A549 (cell line): ENCODE measurements at regions of chr9 and their contacts with region 1.

Region 1: DNA sequence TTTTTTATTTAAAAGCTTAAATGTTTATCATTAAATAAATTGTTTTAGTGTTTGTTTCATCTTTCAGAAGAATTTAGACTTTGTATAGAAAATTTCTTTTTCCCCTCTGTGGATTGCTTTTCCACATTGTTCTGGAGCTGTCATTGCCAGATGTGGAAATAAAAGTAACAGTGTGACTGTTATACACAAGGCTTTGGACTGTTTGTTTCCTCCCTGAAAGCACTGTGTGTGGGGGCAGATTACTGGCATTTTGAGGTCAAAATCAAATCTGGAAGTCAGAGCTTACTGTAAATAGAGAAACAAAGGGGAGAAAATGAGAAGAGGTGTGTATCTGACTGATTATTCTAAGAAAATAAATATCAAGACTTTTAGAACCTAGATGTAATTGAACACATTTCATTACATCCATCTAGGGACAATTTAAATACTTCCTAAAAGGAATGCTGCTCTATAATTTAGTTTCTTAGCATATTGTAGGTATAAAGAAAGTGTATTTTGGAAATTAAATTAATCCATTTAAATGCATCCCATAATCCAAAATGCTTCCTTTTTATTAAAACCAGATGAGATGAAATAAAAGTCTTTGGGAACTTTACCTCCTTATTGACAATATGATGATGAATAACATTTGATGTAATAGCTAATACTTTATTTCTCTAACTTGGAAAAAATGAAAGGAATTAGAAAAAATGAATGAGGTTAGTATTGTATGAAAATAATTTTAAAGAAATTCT is 51.9 kb downstream of the ERCC6L2 start:
- DNase-seq: no peak
- ATAC-seq: no peak
- H3K4me3 ChIP-seq: no peak overlapping the region
- H3K27ac ChIP-seq: no peak overlapping the region
- H3K4me1 ChIP-seq: no peaks in the 10 kb centered on the region
- CTCF ChIP-seq: no peak
- EP300 ChIP-seq: no peak
- POLR2A ChIP-seq: no peak
- RAD21 ChIP-seq: no peak

Region 2: GRCh38 chr9:95966306-95966705 is 38.9 kb after region 1 on chr9:
- CTCF ChIA-PET with region 1: no interaction called
- POLR2A ChIA-PET with region 1: no interaction called
- DNase-seq: no peak
- ATAC-seq: no peak
- H3K4me3 ChIP-seq: no peak overlapping the region
- H3K27ac ChIP-seq: no peak overlapping the region
- H3K4me1 ChIP-seq: no peaks in the 10 kb centered on the region
- CTCF ChIP-seq: no peak
- EP300 ChIP-seq: no peak
- POLR2A ChIP-seq: no peak
- RAD21 ChIP-seq: no peak

Region 3: GRCh38 chr9:96109680-96110351 is 182.4 kb after region 1 on chr9:
- CTCF ChIA-PET with region 1: no interaction called
- POLR2A ChIA-PET with region 1: interaction called, 11 read pairs
- DNase-seq: no peak
- ATAC-seq: no peak
- H3K4me3 ChIP-seq: no peak overlapping the region
- H3K27ac ChIP-seq: no peak overlapping the region
- H3K4me1 ChIP-seq: peaks cover 6% of the 10 kb centered on the region; the same call in 2 of the 3 replicates
- CTCF ChIP-seq: no peak
- EP300 ChIP-seq: no peak
- POLR2A ChIP-seq: no peak
- RAD21 ChIP-seq: no peak